ENCODE measurements at regions of chr14 and their contacts with region 1.

Region 1: GRCh38 chr14:92093320-92093719 is 13.1 kb downstream of the ATXN3 start:
- DNase-seq: no peak
- ATAC-seq: no peak; the same call in 1 of the 2 replicates
- H3K4me3 ChIP-seq: no peak overlapping the region
- H3K27ac ChIP-seq: no peak overlapping the region
- H3K4me1 ChIP-seq: no peaks in the 10 kb centered on the region
- H3K27me3 ChIP-seq: no peaks in the 10 kb centered on the region
- CTCF ChIP-seq: peak; percentile 33; the same call in 1 of the 2 replicates

Region 2: DNA sequence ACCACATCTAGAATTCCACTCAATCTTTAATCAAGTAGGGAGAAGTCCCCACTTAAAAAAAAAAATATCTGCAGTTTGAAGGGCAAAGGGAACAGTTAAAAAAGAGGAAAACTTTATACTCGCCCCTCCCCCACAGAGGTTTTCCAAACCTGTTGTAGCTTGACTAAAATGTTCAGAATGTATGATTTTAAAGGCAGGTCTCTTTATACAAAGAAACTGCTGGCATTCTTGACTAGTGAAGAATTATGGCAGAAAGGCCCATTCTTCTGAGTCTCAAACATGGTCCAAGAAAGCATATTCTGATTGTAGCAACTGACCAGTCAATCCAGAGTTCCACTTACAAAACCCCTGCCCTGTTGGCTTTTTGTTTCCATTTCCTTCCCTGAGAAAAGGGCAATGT is 635.2 kb before region 1 on chr14:
- CTCF ChIA-PET with region 1: no interaction called
- POLR2A ChIA-PET with region 1: no interaction called
- intact Hi-C with region 1: loop called (anchors 5 kb)
- DNase-seq: no peak
- ATAC-seq: no peak
- H3K4me3 ChIP-seq: no peak overlapping the region
- H3K27ac ChIP-seq: no peak overlapping the region
- H3K4me1 ChIP-seq: no peaks in the 10 kb centered on the region
- H3K27me3 ChIP-seq: no peaks in the 10 kb centered on the region
- CTCF ChIP-seq: no peak

Region 3: GRCh38 chr14:93301821-93302447 is 1208.6 kb after region 1 on chr14:
- CTCF ChIA-PET with region 1: no interaction called
- POLR2A ChIA-PET with region 1: no interaction called
- intact Hi-C with region 1: no loop called
- DNase-seq: peak; percentile 55
- ATAC-seq: peak; percentile 76
- H3K4me3 ChIP-seq: no peak overlapping the region
- H3K27ac ChIP-seq: peak overlapping the region; percentile 62
- H3K4me1 ChIP-seq: peaks cover 9% of the 10 kb centered on the region
- H3K27me3 ChIP-seq: no peaks in the 10 kb centered on the region
- CTCF ChIP-seq: no peak